ENCODE measurements at regions of chr15 and their contacts with region 1.

Region 1: DNA sequence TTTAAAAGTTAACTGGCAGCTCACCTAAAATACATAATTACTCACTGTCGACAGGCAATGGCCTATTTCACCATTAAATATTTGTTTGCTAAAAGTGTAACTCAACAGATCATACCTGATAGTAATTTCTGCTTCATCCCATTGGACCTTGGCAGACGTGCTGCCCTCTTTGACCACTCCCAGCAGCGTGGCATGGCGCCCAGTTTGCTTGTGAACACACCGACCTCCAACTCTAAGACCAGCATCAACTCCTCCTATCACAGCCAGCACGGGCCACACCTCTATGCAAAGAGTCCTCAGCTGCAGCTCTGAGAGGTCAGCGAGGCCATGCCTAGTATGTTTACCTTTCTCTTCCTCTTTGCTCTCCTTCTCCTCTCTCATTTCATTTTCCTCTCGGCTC is 80.5 kb downstream of the FBXL22 start:
- DNase-seq: peak; percentile 90
- ATAC-seq: peak; percentile 97
- H3K4me3 ChIP-seq: peak overlapping the region; percentile 7; the same call in 1 of the 2 replicates
- H3K27ac ChIP-seq: peak overlapping the region; percentile 36
- H3K4me1 ChIP-seq: peaks cover 21% of the 10 kb centered on the region
- H3K27me3 ChIP-seq: no peaks in the 10 kb centered on the region
- CTCF ChIP-seq: no peak

Region 2: DNA sequence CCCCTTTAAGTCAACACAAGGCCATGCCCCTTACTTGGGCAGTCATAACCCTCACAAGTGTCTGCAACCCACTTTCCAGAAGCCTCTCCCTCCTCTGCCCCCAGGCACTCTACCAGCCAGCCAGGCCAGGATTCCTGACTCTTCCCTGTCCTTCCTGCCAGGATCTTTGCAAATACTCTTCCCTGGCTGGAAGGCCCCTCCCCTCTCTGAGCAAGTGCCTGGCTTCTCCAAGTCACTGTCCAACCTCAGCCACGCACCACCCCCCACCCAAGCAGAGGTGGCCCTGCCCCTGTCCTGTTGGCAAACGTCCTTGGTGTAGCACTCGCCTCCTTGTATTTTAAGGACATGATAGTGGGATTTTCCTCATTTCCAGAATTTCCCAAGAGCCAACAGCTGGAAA is 228.0 kb before region 1 on chr15:
- CTCF ChIA-PET with region 1: no interaction called
- POLR2A ChIA-PET with region 1: no interaction called
- intact Hi-C with region 1: no loop called
- DNase-seq: peak; percentile 46
- ATAC-seq: peak; percentile 85; the same call in 1 of the 2 replicates
- H3K4me3 ChIP-seq: no peak overlapping the region
- H3K27ac ChIP-seq: no peak overlapping the region
- H3K4me1 ChIP-seq: peaks cover 7% of the 10 kb centered on the region
- H3K27me3 ChIP-seq: no peaks in the 10 kb centered on the region
- CTCF ChIP-seq: no peak

Region 3: DNA sequence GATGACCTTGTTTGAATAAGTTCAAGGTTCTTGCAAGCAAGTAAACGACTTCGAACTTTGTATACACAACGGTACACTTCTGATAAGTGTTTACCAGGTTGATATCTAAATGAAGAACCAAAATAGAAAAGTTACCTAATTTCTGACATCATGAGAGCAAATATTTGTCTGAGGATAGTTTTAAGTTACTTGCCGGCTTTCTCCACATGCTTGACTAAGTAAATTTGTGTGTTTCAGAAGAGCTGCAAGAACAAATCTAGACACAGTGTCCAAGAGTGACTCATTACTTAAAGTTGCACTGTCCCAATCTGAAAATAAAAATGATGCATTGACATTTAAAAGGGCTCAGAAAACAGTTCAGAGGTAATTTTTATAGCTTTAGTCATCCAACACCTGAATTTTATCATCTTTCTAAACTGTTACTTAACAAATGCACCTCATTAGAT is 40.9 kb after region 1 on chr15:
- CTCF ChIA-PET with region 1: no interaction called
- POLR2A ChIA-PET with region 1: no interaction called
- intact Hi-C with region 1: loop called (anchors 5 kb)
- DNase-seq: peak; percentile 68
- ATAC-seq: peak; percentile 78
- H3K4me3 ChIP-seq: no peak overlapping the region
- H3K27ac ChIP-seq: peak overlapping the region; percentile 13
- H3K4me1 ChIP-seq: peaks cover 37% of the 10 kb centered on the region
- H3K27me3 ChIP-seq: no peaks in the 10 kb centered on the region
- CTCF ChIP-seq: no peak

Measured in PC-3 (cell line).